Astrocyte of the cerebellum (primary cell): ENCODE measurements at regions of chr2 and their contacts with region 1.

Region 1: GRCh38 chr2:191521608-191522208 is 156.2 kb upstream of the NABP1 start:
- DNase-seq: peak; percentile 50
- H3K4me3 ChIP-seq: no peak overlapping the region
- CTCF ChIP-seq: peak; percentile 31

Region 2: DNA sequence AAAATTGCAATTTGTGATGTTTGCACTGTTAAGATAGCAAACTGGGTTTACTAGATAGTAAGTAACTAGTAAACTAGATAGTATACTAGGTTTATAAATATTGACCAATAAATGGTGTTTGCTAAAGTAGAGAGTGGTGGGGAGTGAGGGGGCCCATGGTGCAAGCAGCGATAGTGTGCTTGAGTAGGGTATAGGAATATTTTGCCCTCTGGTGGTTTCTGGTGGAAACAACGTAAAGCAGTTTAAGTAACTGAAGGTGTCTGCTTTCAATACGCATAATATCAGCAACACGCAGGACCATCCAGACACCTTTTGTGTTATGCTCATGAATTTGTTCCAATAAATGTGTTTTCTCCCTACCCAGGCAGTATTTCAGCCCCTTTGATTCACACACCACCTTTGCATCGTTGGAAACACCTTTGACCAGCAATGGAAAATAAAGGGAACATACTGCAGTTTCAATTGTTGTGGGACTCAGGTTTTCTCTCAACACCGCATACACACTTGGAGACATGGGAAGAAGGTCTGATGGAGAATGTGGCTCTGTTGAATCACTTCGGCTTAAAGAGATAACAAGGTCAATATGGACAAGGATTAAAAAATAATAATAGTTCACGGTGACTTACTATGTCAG is 491.1 kb before region 1 on chr2:
- in situ Hi-C with region 1: loop called (anchors 25 kb)
- DNase-seq: no peak
- H3K4me3 ChIP-seq: no peak overlapping the region
- CTCF ChIP-seq: peak; percentile 72

Region 3: DNA sequence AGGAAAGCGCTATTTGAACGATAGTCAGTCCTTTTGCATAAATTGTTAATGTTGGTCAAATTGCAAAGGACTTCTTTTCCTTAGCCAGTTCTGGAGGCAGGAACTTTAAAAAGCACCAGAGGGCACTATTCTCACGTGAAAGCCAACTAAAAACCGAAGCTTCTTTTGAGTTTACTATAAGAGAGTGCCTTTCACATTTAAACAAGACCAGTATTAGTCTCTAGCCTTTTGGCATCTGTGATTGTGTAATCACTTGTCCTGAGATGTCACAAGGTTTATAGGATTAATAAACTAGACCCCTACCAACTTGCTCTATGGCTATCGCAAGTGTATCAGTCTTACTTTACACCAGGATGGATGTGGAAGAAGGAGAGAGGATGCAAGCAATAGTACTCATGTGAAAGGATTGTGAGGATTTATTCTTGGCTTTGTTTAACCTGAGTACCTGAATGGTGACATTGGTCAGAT is 356.5 kb before region 1 on chr2:
- in situ Hi-C with region 1: loop called (anchors 25 kb)
- DNase-seq: peak; percentile 57
- H3K4me3 ChIP-seq: no peak overlapping the region
- CTCF ChIP-seq: peak; percentile 73

Region 4: DNA sequence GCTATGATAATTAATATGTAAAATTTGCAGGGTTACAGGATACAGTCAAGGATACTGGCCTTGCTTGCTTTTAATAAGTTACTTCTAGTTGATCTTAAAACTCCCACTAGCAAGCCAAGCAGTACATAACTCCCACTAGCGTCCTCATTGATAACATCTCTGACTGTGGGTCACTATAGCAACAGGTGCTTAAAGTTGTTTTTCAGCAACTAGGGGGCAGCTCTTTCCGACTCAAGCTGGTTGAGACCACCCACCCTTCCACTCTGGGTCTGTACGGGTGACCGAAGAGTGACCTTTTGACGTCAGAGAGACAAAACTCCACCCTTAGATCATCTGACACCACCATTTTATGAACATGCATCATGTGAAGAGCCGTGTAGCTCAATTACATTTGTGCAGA is 67.9 kb before region 1 on chr2:
- in situ Hi-C with region 1: no loop called
- DNase-seq: no peak
- H3K4me3 ChIP-seq: no peak overlapping the region
- CTCF ChIP-seq: no peak

Region 5: GRCh38 chr2:191617575-191617974 is 95.9 kb after region 1 on chr2:
- in situ Hi-C with region 1: no loop called
- DNase-seq: no peak
- H3K4me3 ChIP-seq: no peak overlapping the region
- CTCF ChIP-seq: no peak